ENCODE measurements at regions of chr4 and their contacts with region 1.

Region 1: DNA sequence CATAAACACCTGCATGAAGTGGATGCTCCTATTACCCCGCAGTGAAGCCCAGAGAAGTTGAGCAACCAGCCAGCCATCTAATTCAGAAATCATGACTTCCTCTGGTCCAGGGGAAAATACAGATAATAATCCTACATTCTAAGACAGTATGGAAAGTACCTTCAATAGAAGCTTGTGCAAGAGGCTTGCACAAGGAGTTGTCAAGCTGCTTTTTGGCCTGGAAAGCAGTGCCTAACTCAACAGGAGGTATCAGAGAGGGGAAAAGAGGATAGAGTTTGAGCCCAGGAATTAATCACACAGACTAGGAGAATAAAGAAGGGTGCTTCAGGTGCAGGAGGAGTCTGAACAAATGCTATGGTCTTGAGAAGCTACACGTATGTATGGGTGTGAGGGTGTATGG is 26.7 kb downstream of the TMEM192 start:
- DNase-seq: peak; percentile 20
- H3K4me3 ChIP-seq: no peak overlapping the region
- H3K27ac ChIP-seq: no peak overlapping the region
- H3K4me1 ChIP-seq: no peaks in the 10 kb centered on the region
- H3K27me3 ChIP-seq: no peaks in the 10 kb centered on the region
- CTCF ChIP-seq: no peak

Region 2: GRCh38 chr4:164606478-164606877 is 479.5 kb before region 1 on chr4:
- CTCF ChIA-PET with region 1: no interaction called
- POLR2A ChIA-PET with region 1: no interaction called
- intact Hi-C with region 1: no loop called
- DNase-seq: no peak
- H3K4me3 ChIP-seq: no peak overlapping the region
- H3K27ac ChIP-seq: no peak overlapping the region
- H3K4me1 ChIP-seq: no peaks in the 10 kb centered on the region
- H3K27me3 ChIP-seq: no peaks in the 10 kb centered on the region
- CTCF ChIP-seq: no peak

Region 3: GRCh38 chr4:165027762-165028402 is 58.1 kb before region 1 on chr4:
- CTCF ChIA-PET with region 1: no interaction called
- POLR2A ChIA-PET with region 1: interaction called, 10 read pairs
- intact Hi-C with region 1: no loop called
- DNase-seq: no peak
- H3K4me3 ChIP-seq: no peak overlapping the region
- H3K27ac ChIP-seq: no peak overlapping the region
- H3K4me1 ChIP-seq: no peaks in the 10 kb centered on the region
- H3K27me3 ChIP-seq: no peaks in the 10 kb centered on the region
- CTCF ChIP-seq: no peak

Measured in A673 (cell line).